ENCODE measurements at regions of chr14 and their contacts with region 1.

Region 1: DNA sequence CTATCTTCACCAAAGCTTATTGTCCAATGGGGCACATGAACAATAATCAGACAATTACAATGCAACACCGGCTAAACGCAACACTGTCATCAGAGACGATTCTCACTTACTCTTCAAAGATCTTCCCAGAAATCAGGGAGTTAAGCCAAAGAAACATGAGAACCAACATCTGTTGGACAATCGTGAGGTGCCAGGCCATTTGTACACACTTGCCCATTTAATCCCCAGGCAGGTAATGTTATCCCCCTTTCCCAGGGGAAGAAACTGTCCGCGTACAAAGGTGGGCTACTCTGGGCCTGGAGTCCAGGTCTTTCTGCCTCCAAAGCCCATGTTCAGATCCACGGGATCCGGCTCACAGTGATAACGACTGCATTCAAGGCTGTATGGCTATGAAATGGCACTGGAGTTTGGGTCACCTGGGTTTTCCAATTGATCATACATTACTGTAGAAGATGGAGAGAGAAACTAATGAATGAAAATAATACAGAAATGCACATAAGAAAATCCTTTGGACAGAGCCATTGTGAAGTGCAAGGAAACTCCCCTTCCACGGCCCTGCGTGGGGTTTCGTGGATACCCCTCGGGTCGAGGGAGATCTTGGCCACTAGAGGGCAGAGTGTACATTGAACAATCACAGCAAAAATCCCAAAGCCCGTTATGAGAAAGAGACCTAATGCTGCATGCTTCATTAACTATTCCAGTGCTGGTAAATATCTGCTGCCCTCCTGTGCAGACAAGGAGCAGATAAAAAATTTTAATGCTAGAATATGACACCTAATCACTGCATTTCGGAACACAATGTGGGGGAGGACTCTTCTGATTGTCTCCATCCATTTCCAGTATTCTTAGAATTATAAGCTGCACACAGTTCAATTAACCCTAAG is 111.4 kb downstream of the EGLN3 start:
- DNase-seq: peak; percentile 71
- H3K4me3 ChIP-seq: no peak overlapping the region
- H3K27ac ChIP-seq: no peak overlapping the region
- H3K4me1 ChIP-seq: peaks cover 0 to 8% (median 2%) of the 10 kb centered on the region in 6 donors
- H3K27me3 ChIP-seq: no peaks in the 10 kb centered on the region
- CTCF ChIP-seq: peak in 10 of 11 experiments; percentile 28 to 85 (median 67)
- POLR2A ChIP-seq: no peak

Region 2: GRCh38 chr14:34098045-34098984 is 258.9 kb after region 1 on chr14:
- intact Hi-C with region 1: loop called (anchors 2 kb)
- DNase-seq: no peak
- H3K4me3 ChIP-seq: no peak overlapping the region
- H3K27ac ChIP-seq: no peak overlapping the region
- H3K4me1 ChIP-seq: no peaks in the 10 kb centered on the region
- H3K27me3 ChIP-seq: no peaks in the 10 kb centered on the region
- CTCF ChIP-seq: peak in 9 of 11 experiments; percentile 8 to 56 (median 52)
- POLR2A ChIP-seq: no peak

Region 3: GRCh38 chr14:34227834-34228649 is 388.6 kb after region 1 on chr14:
- intact Hi-C with region 1: loop called (anchors 5 kb)
- DNase-seq: no peak
- H3K4me3 ChIP-seq: no peak overlapping the region
- H3K27ac ChIP-seq: no peak overlapping the region
- H3K4me1 ChIP-seq: peaks cover 0 to 6% (median 0%) of the 10 kb centered on the region in 6 donors
- H3K27me3 ChIP-seq: peaks cover 0 to 4% (median 0%) of the 10 kb centered on the region in 7 donors
- CTCF ChIP-seq: peak; percentile 29 to 85 (median 66)
- POLR2A ChIP-seq: no peak

Region 4: DNA sequence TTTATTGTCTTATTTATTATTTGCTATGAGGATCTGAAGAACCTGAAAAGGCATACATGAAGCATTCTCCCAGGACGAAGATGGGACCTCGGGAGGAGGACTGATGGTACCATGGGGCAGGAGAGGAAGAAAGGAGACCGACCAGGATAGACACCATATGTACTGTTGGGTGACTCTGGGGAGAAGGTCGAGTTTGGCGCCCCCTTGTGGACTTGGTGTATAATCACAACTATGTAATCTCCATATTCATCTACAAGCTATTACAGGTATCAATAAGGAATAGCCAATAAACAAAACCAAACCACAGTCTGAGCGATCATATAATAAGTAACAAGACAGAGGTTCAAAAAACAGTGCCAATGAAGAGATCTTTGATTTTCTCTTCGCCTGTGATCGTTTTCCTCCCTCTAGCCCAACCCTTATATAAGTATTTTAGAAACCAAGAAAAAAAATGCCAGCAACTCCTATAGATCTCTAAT is 483.5 kb after region 1 on chr14:
- intact Hi-C with region 1: loop called (anchors 10 kb)
- DNase-seq: peak; percentile 87
- H3K4me3 ChIP-seq: no peak overlapping the region
- H3K27ac ChIP-seq: no peak overlapping the region
- H3K4me1 ChIP-seq: peaks cover 0 to 9% (median 3%) of the 10 kb centered on the region in 6 donors
- H3K27me3 ChIP-seq: no peaks in the 10 kb centered on the region
- CTCF ChIP-seq: peak; percentile 21 to 71 (median 55)
- POLR2A ChIP-seq: no peak